Activated CD4-positive, alpha-beta T cell treated with anti-CD3 and anti-CD28 coated beads, Interleukin-2, amount 10 ng/mL, durations not matched to agents 24 days and 14 days (primary cell): ENCODE measurements at regions of chr22 and their contacts with region 1.

Region 1: GRCh38 chr22:23591201-23591791 is 11.2 kb upstream of the IGLL1 start:
- DNase-seq: peak; percentile 84
- H3K4me3 Mint-ChIP-seq: no peak overlapping the region
- H3K27ac Mint-ChIP-seq: no peak overlapping the region
- H3K4me1 Mint-ChIP-seq: no peaks in the 10 kb centered on the region
- H3K27me3 Mint-ChIP-seq: peaks cover 2% of the 10 kb centered on the region

Region 2: DNA sequence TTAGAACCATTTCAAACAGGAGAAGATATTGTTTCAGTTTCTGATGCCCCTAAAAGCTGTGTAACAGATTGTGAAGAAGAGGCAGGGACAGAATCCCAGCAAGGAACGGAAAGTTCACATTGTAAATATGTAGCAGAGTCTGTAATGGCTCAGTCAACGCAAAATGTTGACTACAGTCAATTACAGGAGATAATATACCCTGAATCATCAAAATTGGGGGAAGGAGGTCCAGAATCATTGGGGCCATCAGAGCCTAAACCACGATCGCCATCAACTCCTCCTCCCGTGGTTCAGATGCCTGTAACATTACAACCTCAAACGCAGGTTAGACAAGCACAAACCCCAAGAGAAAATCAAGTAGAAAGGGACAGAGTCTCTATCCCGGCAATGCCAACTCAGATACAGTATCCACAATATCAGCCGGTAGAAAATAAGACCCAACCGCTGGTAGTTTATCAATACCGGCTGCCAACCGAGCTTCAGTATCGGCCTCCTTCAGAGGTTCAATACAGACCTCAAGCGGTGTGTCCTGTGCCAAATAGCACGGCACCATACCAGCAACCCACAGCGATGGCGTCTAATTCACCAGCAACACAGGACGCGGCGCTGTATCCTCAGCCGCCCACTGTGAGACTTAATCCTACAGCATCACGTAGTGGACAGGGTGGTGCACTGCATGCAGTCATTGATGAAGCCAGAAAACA is 52.0 kb before region 1 on chr22:
- intact Hi-C with region 1: loop called (anchors 2 kb)
- DNase-seq: peak; percentile 92
- H3K4me3 Mint-ChIP-seq: peak overlapping the region; percentile 55
- H3K27ac Mint-ChIP-seq: no peak overlapping the region
- H3K4me1 Mint-ChIP-seq: peaks cover 8% of the 10 kb centered on the region
- H3K27me3 Mint-ChIP-seq: peaks cover 13% of the 10 kb centered on the region

Region 3: GRCh38 chr22:23556016-23556620 is 35.2 kb before region 1 on chr22:
- intact Hi-C with region 1: no loop called
- DNase-seq: no peak
- H3K4me3 Mint-ChIP-seq: no peak overlapping the region
- H3K27ac Mint-ChIP-seq: no peak overlapping the region
- H3K4me1 Mint-ChIP-seq: no peaks in the 10 kb centered on the region
- H3K27me3 Mint-ChIP-seq: peaks cover 2% of the 10 kb centered on the region